ENCODE measurements at regions of chr15 and their contacts with region 1.

Region 1: GRCh38 chr15:75578948-75579920 is at the start of gene PTPN9:
- DNase-seq: peak; percentile 77 to 82
- ATAC-seq: peak; percentile 88 to 90
- H3K4me3 ChIP-seq: peak within 1 kb of the TSS; percentile 67
- H3K27ac ChIP-seq: peak within 1 kb of the TSS; percentile 96 to 97
- H3K4me1 ChIP-seq: peaks cover 16% of the 10 kb centered on the region
- CTCF ChIP-seq: peak; percentile 65
- EP300 ChIP-seq: no peak
- POLR2A ChIP-seq: peak; percentile 62
- RAD21 ChIP-seq: peak in 1 of 2 experiments; percentile 59; a peak in 3 of 5 replicates
- polyA plus RNA-seq, gene PTPN9: 60.2 and 71.2 TPM in 2 replicates

Region 2: DNA sequence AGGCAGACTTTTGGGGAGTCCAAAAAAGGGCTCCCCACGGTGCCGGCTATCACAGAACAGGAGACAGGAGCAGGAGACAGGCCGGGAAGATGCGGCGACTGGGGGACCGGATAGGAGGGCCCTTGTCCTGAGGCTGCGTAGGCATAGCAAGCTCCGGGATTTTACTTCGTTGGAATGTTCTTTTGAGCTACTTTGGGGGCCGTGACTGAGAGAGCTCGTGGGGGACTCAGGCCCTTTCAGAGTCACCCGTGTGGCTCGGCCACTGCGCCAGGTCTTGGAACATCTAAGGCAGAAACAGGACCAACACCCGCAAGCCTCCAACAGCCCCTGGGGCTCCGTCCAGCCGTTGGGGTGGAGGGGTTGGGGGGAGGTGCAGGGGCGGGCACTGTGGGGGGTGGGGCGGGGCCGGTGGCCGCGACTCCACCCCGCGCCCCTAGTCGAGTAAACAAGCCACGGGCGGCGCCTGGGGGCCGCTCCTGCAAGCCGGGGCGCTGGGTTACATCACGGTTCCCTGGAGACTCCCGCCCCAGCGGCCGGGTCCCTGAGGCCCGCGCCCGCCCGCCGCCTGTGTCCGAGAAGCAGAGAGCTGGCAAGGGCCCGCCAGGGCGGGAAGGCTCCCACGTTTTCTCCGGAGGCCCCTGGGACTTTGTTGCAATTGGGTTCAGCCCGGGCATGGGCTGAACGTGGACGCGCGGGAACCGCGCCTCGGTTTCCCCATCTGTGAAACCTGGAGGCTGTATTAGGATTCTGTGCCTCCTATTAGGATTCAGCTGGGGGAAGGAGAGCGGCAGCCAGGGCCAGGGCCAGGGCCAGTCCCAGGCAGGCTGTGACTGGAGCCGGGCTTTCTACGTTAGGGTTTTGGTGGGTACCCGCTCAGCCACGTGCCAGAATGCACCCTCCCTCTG is 400.8 kb before region 1 on chr15:
- CTCF ChIA-PET with region 1: no interaction called
- POLR2A ChIA-PET with region 1: no interaction called
- DNase-seq: no peak
- ATAC-seq: no peak
- H3K4me3 ChIP-seq: no peak overlapping the region
- H3K27ac ChIP-seq: peak overlapping the region; percentile 76 to 79; a peak in 4 of 6 replicates
- H3K4me1 ChIP-seq: peaks cover 54% of the 10 kb centered on the region
- CTCF ChIP-seq: no peak
- EP300 ChIP-seq: no peak
- POLR2A ChIP-seq: no peak
- RAD21 ChIP-seq: no peak

Region 3: GRCh38 chr15:75453703-75454470 is 125.3 kb before region 1 on chr15:
- CTCF ChIA-PET with region 1: interaction called, 5 read pairs
- POLR2A ChIA-PET with region 1: interaction called, 30 read pairs
- DNase-seq: peak; percentile 99 to 100
- ATAC-seq: peak; percentile 22 to 57
- H3K4me3 ChIP-seq: peak overlapping the region; percentile 74
- H3K27ac ChIP-seq: peak overlapping the region; percentile 92
- H3K4me1 ChIP-seq: peaks cover 18% of the 10 kb centered on the region
- CTCF ChIP-seq: no peak
- EP300 ChIP-seq: no peak
- POLR2A ChIP-seq: peak; percentile 53
- RAD21 ChIP-seq: no peak; a peak in 1 of 5 replicates

Region 4: DNA sequence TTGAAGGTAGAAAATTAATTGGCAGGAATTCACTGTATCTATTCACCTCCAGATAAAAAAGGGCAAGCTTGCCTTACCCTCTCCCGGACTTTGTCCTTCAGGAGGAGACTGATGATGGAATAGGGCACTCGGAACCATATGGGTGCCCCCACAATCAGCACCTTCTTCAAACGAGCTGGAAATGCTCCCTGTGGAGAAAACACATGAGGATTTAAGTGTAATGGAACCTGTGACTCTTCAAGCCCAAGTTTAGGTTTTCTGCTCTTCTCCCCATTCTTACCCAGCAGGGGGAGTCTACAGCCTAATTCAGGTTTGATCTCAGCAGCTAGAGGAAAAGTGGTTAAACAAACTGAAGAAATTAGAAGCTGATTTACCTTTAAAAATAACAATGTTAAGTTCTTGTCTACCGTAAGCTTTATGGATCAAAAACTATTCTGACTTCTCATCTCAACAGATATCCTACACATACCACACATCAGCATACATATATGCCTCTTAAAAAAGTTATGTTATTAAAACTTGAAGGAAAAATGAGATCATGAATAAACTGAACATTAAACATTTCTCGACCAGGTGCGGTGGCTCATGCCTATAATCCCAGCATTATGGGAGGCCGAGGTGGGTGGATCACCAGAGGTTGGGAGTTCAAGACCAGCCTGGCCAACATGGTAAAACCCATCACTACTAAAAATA is 70.2 kb before region 1 on chr15:
- CTCF ChIA-PET with region 1: interaction called, 14 read pairs
- POLR2A ChIA-PET with region 1: interaction called, 4 read pairs
- DNase-seq: peak; percentile 33 to 70
- ATAC-seq: peak; percentile 86 to 92
- H3K4me3 ChIP-seq: no peak overlapping the region
- H3K27ac ChIP-seq: no peak overlapping the region
- H3K4me1 ChIP-seq: no peaks in the 10 kb centered on the region
- CTCF ChIP-seq: peak; percentile 63
- EP300 ChIP-seq: no peak
- POLR2A ChIP-seq: no peak
- RAD21 ChIP-seq: peak; percentile 60 to 69

Region 5: GRCh38 chr15:75532413-75533147 is 46.7 kb before region 1 on chr15:
- CTCF ChIA-PET with region 1: interaction called, 15 read pairs
- POLR2A ChIA-PET with region 1: no interaction called
- DNase-seq: peak; percentile 64 to 84
- ATAC-seq: peak; percentile 96
- H3K4me3 ChIP-seq: no peak overlapping the region
- H3K27ac ChIP-seq: peak overlapping the region; percentile 53 to 56; a peak in 5 of 6 replicates
- H3K4me1 ChIP-seq: peaks cover 39% of the 10 kb centered on the region
- CTCF ChIP-seq: peak; percentile 62
- EP300 ChIP-seq: no peak
- POLR2A ChIP-seq: no peak
- RAD21 ChIP-seq: peak in 1 of 2 experiments; percentile 38; a peak in 3 of 5 replicates

Region 6: GRCh38 chr15:75565062-75565970 is 13.9 kb before region 1 on chr15:
- CTCF ChIA-PET with region 1: interaction called, 15 read pairs
- POLR2A ChIA-PET with region 1: interaction called, 6 read pairs
- DNase-seq: no peak
- ATAC-seq: peak; percentile 49 to 66; a peak in 5 of 6 replicates
- H3K4me3 ChIP-seq: no peak overlapping the region
- H3K27ac ChIP-seq: peak overlapping the region in 1 of 2 experiments; percentile 1; a peak in 1 of 6 replicates
- H3K4me1 ChIP-seq: peaks cover 11% of the 10 kb centered on the region
- CTCF ChIP-seq: no peak
- EP300 ChIP-seq: no peak
- POLR2A ChIP-seq: no peak
- RAD21 ChIP-seq: no peak

Region 7: GRCh38 chr15:75591655-75592364 is 12.6 kb after region 1 on chr15:
- CTCF ChIA-PET with region 1: interaction called, 22 read pairs
- POLR2A ChIA-PET with region 1: interaction called, 3 read pairs
- DNase-seq: no peak
- ATAC-seq: peak in 1 of 2 experiments; percentile 30; a peak in 1 of 6 replicates
- H3K4me3 ChIP-seq: no peak overlapping the region
- H3K27ac ChIP-seq: no peak overlapping the region
- H3K4me1 ChIP-seq: no peaks in the 10 kb centered on the region
- CTCF ChIP-seq: no peak
- EP300 ChIP-seq: no peak
- POLR2A ChIP-seq: no peak
- RAD21 ChIP-seq: no peak

Region 8: GRCh38 chr15:75625542-75626347 is 46.5 kb after region 1 on chr15 and contains the start of gene SNUPN:
- CTCF ChIA-PET with region 1: interaction called, 4 read pairs
- POLR2A ChIA-PET with region 1: interaction called, 14 read pairs
- DNase-seq: peak; percentile 98 to 99
- ATAC-seq: peak; percentile 95
- H3K4me3 ChIP-seq: peak within 1 kb of the TSS; percentile 96
- H3K27ac ChIP-seq: peak within 1 kb of the TSS; percentile 98 to 100
- H3K4me1 ChIP-seq: peaks cover 26% of the 10 kb centered on the region
- CTCF ChIP-seq: no peak
- EP300 ChIP-seq: no peak
- POLR2A ChIP-seq: peak; percentile 90
- RAD21 ChIP-seq: no peak
- polyA plus RNA-seq, gene SNUPN: 33.6 and 38.5 TPM in 2 replicates

Region 9: GRCh38 chr15:75705853-75706681 is 126.8 kb after region 1 on chr15:
- CTCF ChIA-PET with region 1: no interaction called
- POLR2A ChIA-PET with region 1: no interaction called
- DNase-seq: peak in 1 of 2 experiments; percentile 40
- ATAC-seq: peak in 1 of 2 experiments; percentile 6; a peak in 1 of 6 replicates
- H3K4me3 ChIP-seq: no peak overlapping the region
- H3K27ac ChIP-seq: no peak overlapping the region
- H3K4me1 ChIP-seq: peaks cover 9% of the 10 kb centered on the region; the same call in 2 of the 3 replicates
- CTCF ChIP-seq: no peak
- EP300 ChIP-seq: no peak
- POLR2A ChIP-seq: no peak
- RAD21 ChIP-seq: no peak

Region 10: DNA sequence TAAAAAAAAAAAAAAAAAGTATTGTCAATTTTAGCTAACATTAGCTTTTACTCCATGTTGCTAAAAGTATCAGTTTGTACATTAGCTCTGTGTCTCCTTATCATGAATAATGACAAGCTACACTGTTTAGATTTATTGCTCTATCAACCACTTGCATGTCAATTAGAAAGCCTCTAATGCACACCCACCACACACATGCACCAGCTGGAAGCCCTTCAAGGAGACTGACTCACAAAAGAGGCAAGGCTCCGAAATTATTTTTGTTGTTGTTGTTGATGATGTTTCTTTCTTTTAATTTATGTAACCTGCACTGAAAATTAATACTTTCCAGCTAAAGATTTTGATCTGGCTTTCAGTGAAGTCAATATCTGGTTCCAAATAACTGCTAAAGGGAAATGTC is 660.6 kb after region 1 on chr15:
- CTCF ChIA-PET with region 1: no interaction called
- POLR2A ChIA-PET with region 1: no interaction called
- DNase-seq: no peak
- ATAC-seq: no peak
- H3K4me3 ChIP-seq: no peak overlapping the region
- H3K27ac ChIP-seq: no peak overlapping the region
- H3K4me1 ChIP-seq: no peaks in the 10 kb centered on the region
- CTCF ChIP-seq: no peak
- EP300 ChIP-seq: no peak
- POLR2A ChIP-seq: no peak
- RAD21 ChIP-seq: no peak